ENCODE measurements at regions of chr3 and their contacts with region 1.

Region 1: DNA sequence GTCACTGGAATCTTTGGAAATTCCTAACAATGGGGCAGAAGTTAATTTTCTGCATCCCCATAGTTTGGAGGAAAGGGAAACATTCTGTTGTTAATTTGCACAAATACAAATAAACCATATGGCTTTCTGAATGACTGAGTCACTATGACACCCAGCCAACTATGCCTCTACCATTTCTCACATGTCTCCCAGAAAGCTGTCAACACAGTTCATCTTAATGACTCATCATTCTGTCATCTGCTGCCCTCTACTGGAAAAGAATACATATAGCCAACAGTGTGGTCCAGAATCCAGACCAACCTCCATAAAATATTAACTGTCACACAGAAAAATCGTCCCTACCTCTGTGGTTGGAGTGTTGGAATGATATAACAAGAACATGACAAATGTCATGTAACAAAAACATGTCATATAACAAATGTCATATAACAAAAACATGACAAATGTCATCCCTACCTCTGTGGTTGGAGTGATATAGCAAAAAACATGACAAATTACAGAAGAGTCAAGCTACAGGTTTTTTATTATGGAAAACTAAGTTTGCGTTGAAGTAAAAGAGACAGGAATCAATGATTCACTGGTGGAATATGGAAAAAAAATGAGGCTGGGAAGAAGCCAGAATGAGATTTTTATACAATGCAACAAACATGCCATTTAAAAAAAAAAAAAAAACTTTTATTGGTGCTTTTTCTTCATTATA is 47.7 kb upstream of the GYG1 start:
- DNase-seq: peak in 1 of 2 donors; percentile 29
- ATAC-seq: peak; percentile 74 to 93 (median 82)
- H3K4me3 ChIP-seq: no peak overlapping the region
- H3K27ac ChIP-seq: no peak overlapping the region
- H3K4me1 ChIP-seq: peaks cover 0 to 3% (median 0%) of the 10 kb centered on the region in 9 donors
- H3K27me3 ChIP-seq: no peaks in the 10 kb centered on the region
- CTCF ChIP-seq: peak; percentile 37 to 77 (median 72)

Region 2: DNA sequence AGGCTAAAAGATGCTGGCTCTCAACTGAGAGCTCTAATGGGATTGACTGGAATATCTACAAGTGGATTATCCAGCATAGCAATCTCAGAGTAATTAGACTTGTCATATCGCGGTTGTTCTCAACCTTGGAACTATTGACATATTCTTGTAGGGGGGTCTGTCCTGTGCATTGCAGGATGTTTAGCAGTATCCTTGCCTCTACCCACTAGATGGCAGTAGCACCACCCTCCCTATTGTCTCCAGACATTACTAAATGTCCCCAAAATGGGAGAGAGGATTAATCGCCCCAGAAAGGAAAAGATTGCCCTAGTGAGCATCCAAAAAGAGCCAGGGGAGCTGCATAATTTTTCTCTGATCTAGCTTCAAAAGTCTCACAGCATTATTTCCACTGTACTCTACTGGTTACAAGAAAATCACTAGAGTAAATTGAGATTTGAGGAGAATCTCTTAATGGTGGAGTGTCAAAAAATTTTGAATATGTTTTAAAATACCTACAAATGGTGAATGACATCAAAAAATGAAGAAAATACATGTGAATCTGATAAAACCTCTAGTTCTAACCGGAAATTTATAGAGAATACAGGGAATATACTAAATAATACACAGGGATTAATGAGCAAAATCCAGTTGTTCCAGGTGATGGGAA is 634.1 kb before region 1 on chr3:
- intact Hi-C with region 1: loop called in 1 of 10 experiments (anchors 10 kb)
- DNase-seq: no peak
- ATAC-seq: peak in 1 of 8 donors; percentile 53
- H3K4me3 ChIP-seq: no peak overlapping the region
- H3K27ac ChIP-seq: no peak overlapping the region
- H3K4me1 ChIP-seq: no peaks in the 10 kb centered on the region
- H3K27me3 ChIP-seq: no peaks in the 10 kb centered on the region
- CTCF ChIP-seq: peak in 8 of 9 donors; percentile 28 to 62 (median 50)

Region 3: GRCh38 chr3:148727247-148727646 is 216.4 kb before region 1 on chr3:
- intact Hi-C with region 1: loop called in 1 of 10 experiments (anchors 2 kb)
- DNase-seq: no peak
- ATAC-seq: no peak
- H3K4me3 ChIP-seq: no peak overlapping the region
- H3K27ac ChIP-seq: no peak overlapping the region
- H3K4me1 ChIP-seq: peaks cover 0 to 10% (median 0%) of the 10 kb centered on the region in 9 donors
- H3K27me3 ChIP-seq: no peaks in the 10 kb centered on the region
- CTCF ChIP-seq: peak in 4 of 9 donors; percentile 12 to 40 (median 16)

Region 4: DNA sequence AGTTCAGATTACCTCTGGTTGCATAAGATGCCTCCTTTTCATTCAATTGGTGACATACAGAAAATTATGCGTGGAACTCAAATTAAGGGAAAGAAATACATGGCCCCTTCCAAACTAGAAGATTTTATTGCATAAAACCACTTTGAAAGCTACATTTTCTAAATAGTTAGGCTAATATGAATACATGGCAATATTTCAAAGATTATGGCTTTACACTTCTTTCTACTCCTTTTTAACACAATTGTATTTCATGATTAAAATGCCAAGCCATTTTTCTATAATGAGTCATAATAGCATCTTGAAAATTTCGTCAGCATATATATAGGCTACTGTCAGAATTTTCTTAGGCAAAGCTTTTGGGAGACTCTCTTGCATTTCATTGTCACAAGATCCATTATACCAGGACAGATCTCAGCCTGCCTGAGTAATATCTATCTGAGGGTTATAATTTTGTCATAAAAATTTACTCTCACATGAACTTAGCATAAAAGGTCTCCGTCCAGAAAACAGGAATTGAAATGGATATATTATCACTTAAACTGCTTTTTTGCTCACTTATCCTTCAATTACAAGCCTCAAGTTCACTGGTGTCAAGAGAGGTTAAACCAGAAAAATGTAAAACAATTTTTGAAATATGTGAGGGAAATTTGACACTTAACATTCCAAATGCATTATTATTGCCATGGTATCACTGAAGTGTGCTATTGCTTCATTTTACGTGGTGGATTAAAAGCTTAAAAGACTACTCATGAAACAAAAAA is 41.4 kb before region 1 on chr3:
- intact Hi-C with region 1: no loop called
- DNase-seq: no peak
- ATAC-seq: no peak
- H3K4me3 ChIP-seq: no peak overlapping the region
- H3K27ac ChIP-seq: no peak overlapping the region
- H3K4me1 ChIP-seq: no peaks in the 10 kb centered on the region
- H3K27me3 ChIP-seq: peaks cover 0 to 13% (median 0%) of the 10 kb centered on the region in 7 donors
- CTCF ChIP-seq: no peak

Region 5: DNA sequence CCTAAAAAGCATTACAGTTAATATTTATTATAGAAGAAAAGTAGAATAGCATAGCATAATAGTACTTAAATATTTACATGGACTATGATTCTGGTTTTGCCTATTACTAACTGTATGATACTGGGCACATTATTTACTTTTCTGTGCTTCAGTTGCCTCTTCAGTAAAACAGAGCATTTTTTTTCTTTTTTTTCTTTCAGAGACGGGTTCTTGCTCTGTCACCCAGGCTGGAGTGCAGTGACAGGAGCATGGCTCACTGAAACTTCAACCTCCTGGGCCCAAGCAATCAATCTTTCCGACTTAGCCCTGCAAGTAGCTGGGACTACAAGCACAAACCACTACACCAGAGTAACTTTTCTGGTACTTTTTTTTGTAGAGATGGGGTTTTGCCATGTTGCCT is 94.7 kb after region 1 on chr3:
- intact Hi-C with region 1: no loop called
- DNase-seq: no peak
- ATAC-seq: no peak
- H3K4me3 ChIP-seq: no peak overlapping the region
- H3K27ac ChIP-seq: no peak overlapping the region
- H3K4me1 ChIP-seq: peaks cover 0 to 6% (median 0%) of the 10 kb centered on the region in 9 donors
- H3K27me3 ChIP-seq: no peaks in the 10 kb centered on the region
- CTCF ChIP-seq: no peak

Region 6: DNA sequence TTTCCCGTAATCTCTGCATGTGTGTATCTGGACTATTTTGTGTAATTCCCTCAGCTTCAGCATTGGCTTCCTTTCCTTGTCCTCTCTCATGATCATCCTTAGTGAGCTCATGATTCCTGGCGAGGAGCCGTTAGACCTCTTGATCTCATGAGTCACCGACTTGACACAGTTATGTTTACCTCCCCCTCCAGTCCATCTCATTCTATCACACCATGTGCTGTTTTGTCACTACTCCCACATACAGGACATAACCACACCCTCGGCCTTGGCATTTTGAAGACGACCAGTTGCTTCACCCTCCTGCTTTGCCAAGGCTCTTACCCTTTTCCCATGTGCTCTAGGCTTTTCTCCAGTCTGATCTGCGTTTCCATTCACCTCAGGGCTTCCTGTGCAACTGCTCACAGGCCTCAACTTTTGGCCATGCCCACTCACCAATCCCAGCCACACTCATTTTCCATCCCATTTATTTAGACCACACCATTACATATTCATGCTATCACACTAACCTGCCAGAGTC is 236.5 kb after region 1 on chr3:
- intact Hi-C with region 1: no loop called
- DNase-seq: peak; percentile 34 to 83
- ATAC-seq: peak; percentile 87 to 99 (median 96)
- H3K4me3 ChIP-seq: no peak overlapping the region
- H3K27ac ChIP-seq: peak overlapping the region in 7 of 10 donors; percentile 31 to 70 (median 61)
- H3K4me1 ChIP-seq: peaks cover 0 to 22% (median 17%) of the 10 kb centered on the region in 9 donors
- H3K27me3 ChIP-seq: no peaks in the 10 kb centered on the region
- CTCF ChIP-seq: no peak

Region 7: DNA sequence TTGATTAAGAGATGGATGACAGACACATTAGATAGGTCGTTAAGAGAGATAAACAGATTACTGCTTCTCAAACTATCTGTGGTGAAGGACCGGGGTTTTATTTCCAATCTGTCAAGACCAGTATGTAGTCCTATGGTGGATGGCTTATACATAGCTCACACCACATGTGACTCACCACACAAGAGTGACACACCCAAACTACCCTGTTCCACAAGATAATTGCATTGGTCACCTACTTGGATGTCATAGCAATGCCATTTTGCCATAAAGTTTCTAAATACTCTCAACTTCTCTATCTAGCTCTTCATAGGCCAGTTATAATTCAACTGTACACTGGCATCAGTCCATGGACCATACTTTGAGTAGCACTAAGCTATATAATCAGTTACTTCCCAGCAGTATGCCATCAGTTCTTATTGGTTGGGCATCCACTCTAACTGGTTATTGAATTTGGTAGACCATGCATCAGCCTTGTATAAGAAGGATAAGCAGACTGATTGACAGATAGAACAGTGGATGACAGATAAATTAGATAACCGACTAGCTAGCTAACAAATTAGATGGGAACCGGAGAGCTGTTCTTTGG is 702.6 kb after region 1 on chr3:
- intact Hi-C with region 1: no loop called
- DNase-seq: no peak
- ATAC-seq: peak in 1 of 8 donors; percentile 56
- H3K4me3 ChIP-seq: no peak overlapping the region
- H3K27ac ChIP-seq: no peak overlapping the region
- H3K4me1 ChIP-seq: peaks cover 13 to 91% (median 54%) of the 10 kb centered on the region in 9 donors
- H3K27me3 ChIP-seq: peaks cover 0 to 22% (median 0%) of the 10 kb centered on the region in 7 donors
- CTCF ChIP-seq: no peak